ENCODE measurements at regions of chr6 and their contacts with region 1.

Region 1: DNA sequence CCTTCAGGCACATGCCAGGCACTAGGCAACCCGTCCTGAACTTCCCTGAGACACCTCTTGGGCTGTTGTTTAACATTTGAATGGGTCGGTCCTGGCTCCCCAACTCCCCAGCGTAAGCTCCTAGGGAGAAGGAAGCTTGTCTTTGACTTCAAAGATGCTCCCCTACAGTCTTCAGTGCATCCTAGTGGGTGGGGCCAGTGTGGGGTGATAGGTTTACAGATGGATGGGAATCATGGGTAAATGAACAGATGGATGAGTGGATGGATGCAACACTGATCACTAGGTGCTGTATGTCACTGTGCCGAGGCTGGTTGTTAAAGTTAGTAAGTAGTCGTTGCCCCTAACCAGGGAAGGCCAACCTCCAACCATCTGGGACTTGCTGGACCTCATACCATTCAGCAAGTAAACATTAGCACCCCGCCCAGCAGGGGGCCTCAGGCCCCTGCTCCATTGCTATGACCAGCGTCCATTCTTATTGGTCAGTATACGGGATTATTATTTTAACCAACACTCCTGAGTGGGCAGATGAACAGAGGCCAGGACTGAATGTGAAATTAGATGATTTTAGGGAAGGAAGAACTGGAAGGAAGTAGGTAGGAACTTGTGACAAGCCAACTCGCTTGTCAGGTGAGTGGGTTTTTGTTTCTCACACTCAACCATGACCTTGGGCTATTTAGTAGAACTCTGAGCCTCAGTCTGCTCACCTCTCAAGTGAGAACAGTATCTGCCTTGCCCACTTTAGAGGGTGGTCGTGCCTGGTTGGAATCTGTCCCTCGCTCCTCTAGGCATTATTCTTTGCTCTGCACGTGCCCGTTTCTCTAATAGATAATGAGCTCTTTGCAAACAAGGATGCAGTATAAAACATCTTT is 82.9 kb upstream of the FOXP4 start:
- DNase-seq: peak; percentile 87
- ATAC-seq: peak; percentile 91

Region 2: DNA sequence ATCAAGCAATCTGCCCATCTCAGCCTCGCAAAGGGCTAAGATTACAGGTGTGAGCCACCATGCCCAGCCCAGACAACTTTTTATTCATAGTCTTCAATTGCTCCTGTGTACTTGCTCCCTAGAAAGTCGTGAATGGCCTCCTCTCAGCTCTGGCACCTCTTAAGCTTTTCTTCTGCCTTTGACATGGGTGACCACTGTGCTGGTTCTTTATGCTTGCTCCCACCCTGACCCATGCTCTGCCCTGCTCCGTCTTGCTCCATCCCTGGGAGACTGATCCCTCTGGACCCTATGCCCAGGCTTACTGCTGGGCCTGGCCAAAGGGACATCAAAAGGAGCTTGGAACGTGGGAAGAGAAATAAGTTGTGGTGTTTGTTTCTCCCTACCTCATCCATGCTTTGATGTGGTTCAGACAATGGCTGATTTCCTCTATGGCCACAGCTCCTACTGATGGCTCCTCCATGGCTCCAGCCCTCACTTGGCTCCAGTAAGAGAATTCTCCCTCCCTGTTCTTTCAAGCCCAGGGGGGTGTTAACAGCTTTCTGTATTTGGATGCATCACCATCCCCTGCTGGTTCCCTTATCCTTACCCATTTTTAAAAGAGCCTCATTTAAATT is 292.6 kb before region 1 on chr6:
- intact Hi-C with region 1: no loop called
- DNase-seq: no peak
- ATAC-seq: no peak

Region 3: GRCh38 chr6:41591859-41592502 is 128.7 kb after region 1 on chr6:
- intact Hi-C with region 1: loop called (anchors 1 kb)
- DNase-seq: peak; percentile 78
- ATAC-seq: peak; percentile 55

Region 4: GRCh38 chr6:41625442-41625841 is 162.1 kb after region 1 on chr6:
- intact Hi-C with region 1: no loop called
- DNase-seq: no peak
- ATAC-seq: peak; percentile 84

Region 5: DNA sequence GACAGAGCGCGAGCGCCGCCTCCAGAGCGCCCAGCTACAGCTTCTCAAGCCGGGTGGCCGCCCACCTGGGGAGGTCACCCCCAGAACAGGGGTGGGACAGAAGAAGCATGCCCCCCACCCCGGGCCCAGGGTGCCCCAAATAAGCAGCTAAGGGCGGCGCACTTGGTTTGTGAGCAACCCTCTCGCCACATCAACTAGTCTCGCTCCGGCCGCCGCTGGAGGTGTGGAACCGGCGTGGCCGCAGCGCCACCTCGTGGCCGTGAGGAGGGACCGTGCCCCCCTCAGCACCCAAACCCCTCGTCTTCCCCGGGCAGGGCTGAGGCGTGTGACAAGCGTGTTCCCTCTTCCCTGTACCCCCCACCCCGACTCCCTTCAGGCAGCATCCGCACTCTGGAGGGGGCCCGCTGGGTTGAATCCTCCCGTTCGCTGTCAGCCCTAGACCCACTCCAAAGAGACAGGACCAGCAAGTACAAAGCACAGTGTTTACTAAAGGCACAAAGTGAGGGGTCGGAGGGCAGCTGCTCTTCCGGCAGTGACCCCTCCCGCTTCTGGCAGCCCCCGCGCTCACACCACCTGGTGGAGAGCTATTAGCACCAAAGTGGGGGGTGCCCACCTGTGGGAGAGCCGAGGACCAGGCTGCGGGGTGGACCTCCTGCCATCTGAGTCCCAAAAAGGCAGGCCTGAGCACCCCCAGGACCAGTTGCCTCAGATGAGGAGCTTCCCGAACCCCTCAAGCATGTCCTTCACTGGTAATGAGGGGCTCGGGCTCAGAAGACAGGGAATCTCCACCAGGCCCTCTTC is 220.4 kb after region 1 on chr6:
- intact Hi-C with region 1: loop called (anchors 2 kb)
- DNase-seq: peak; percentile 93
- ATAC-seq: peak; percentile 82

Measured in Right ventricle myocardium inferior (tissue), 1 donor.